ENCODE measurements at regions of chr15 and their contacts with region 1.

Region 1: GRCh38 chr15:92797168-92797951 is 102.8 kb upstream of the CHD2 start:
- DNase-seq: peak; percentile 46
- ATAC-seq: peak; percentile 93
- H3K4me3 Mint-ChIP-seq: no peak overlapping the region
- H3K27ac Mint-ChIP-seq: peak overlapping the region; percentile 31
- H3K4me1 Mint-ChIP-seq: peaks cover 4% of the 10 kb centered on the region
- H3K27me3 Mint-ChIP-seq: no peaks in the 10 kb centered on the region
- CTCF ChIP-seq: peak; percentile 88

Region 2: DNA sequence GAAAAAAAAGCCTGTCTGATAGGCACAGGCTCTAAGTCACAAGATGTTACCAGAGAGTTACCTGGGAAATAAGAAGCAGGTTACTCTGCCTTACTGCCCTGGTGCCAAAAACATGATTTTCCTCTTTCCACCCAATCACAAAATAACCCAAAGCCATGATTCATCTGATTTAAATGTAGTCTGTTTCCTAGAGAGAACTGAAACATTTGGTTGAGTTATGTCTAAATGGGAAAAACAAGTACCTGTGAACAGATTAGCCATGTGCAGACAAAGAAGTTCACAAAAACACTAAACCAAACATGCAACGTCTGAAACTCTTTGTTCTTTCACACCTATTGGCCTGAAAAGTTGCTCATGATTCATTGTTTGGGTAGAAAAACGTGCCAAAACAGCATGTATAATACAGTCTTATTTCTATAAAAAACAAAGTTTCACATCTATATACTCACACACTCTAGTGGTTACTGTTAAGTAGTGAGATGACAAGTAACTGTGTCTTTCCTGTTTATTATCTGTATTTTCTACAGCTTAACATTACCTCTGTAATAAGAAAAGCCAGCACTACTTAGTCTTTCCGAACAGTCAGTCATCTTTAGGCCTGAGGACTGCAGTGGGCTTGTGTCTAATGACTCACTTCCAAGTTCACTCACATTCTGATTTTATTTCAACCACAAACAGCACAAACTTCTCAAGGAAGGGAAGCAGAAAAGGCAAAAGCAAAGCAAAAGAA is 171.9 kb before region 1 on chr15:
- CTCF ChIA-PET with region 1: no interaction called
- POLR2A ChIA-PET with region 1: no interaction called
- intact Hi-C with region 1: no loop called
- DNase-seq: peak; percentile 32
- ATAC-seq: peak; percentile 90
- H3K4me3 Mint-ChIP-seq: no peak overlapping the region
- H3K27ac Mint-ChIP-seq: peak overlapping the region; percentile 83
- H3K4me1 Mint-ChIP-seq: peaks cover 20% of the 10 kb centered on the region
- H3K27me3 Mint-ChIP-seq: peaks cover 4% of the 10 kb centered on the region
- CTCF ChIP-seq: no peak

Region 3: GRCh38 chr15:92763459-92763858 is 33.9 kb before region 1 on chr15:
- CTCF ChIA-PET with region 1: no interaction called
- POLR2A ChIA-PET with region 1: no interaction called
- intact Hi-C with region 1: no loop called
- DNase-seq: no peak
- ATAC-seq: no peak
- H3K4me3 Mint-ChIP-seq: no peak overlapping the region
- H3K27ac Mint-ChIP-seq: no peak overlapping the region
- H3K4me1 Mint-ChIP-seq: no peaks in the 10 kb centered on the region
- H3K27me3 Mint-ChIP-seq: no peaks in the 10 kb centered on the region
- CTCF ChIP-seq: no peak

Region 4: GRCh38 chr15:92781925-92782453 is 15.4 kb before region 1 on chr15:
- CTCF ChIA-PET with region 1: interaction called, 22 read pairs
- POLR2A ChIA-PET with region 1: interaction called, 3 read pairs
- intact Hi-C with region 1: no loop called
- DNase-seq: no peak
- ATAC-seq: no peak
- H3K4me3 Mint-ChIP-seq: no peak overlapping the region
- H3K27ac Mint-ChIP-seq: no peak overlapping the region
- H3K4me1 Mint-ChIP-seq: no peaks in the 10 kb centered on the region
- H3K27me3 Mint-ChIP-seq: no peaks in the 10 kb centered on the region
- CTCF ChIP-seq: no peak

Region 5: GRCh38 chr15:92903941-92904831 is 106.8 kb after region 1 on chr15:
- CTCF ChIA-PET with region 1: interaction called, 15 read pairs
- POLR2A ChIA-PET with region 1: interaction called, 4 read pairs
- intact Hi-C with region 1: no loop called
- DNase-seq: peak; percentile 99
- ATAC-seq: peak; percentile 81
- H3K4me3 Mint-ChIP-seq: peak overlapping the region; percentile 99
- H3K27ac Mint-ChIP-seq: peak overlapping the region; percentile 100
- H3K4me1 Mint-ChIP-seq: peaks cover 49% of the 10 kb centered on the region
- H3K27me3 Mint-ChIP-seq: no peaks in the 10 kb centered on the region
- CTCF ChIP-seq: no peak

Region 6: GRCh38 chr15:92930054-92930621 is 132.8 kb after region 1 on chr15:
- CTCF ChIA-PET with region 1: interaction called, 41 read pairs
- POLR2A ChIA-PET with region 1: no interaction called
- intact Hi-C with region 1: no loop called
- DNase-seq: no peak
- ATAC-seq: no peak
- H3K4me3 Mint-ChIP-seq: no peak overlapping the region
- H3K27ac Mint-ChIP-seq: peak overlapping the region; percentile 36
- H3K4me1 Mint-ChIP-seq: peaks cover 60% of the 10 kb centered on the region
- H3K27me3 Mint-ChIP-seq: no peaks in the 10 kb centered on the region
- CTCF ChIP-seq: no peak

Region 7: DNA sequence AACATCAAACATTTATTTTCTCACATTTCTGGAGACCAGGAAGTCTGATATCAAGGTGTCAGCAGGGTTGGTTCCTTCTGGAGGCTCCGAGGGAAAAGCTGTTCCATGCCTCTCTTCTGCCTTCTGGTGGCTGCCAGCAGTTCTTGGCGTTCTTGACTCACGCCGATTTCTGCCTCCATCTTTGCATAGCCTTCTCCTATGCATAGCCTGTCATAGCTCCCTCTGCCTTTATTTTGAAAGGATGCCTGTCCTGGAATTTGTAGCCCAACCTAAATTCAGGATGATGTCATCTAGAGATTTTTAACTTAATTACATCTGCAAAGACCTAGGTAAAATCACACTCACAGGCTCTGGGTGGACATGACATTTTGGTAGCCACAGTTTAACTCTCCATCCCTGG is 221.2 kb after region 1 on chr15:
- CTCF ChIA-PET with region 1: interaction called, 17 read pairs
- POLR2A ChIA-PET with region 1: no interaction called
- intact Hi-C with region 1: no loop called
- DNase-seq: no peak
- ATAC-seq: no peak
- H3K4me3 Mint-ChIP-seq: no peak overlapping the region
- H3K27ac Mint-ChIP-seq: peak overlapping the region; percentile 75
- H3K4me1 Mint-ChIP-seq: peaks cover 63% of the 10 kb centered on the region
- H3K27me3 Mint-ChIP-seq: no peaks in the 10 kb centered on the region
- CTCF ChIP-seq: no peak

Region 8: GRCh38 chr15:93035953-93036800 is 238.8 kb after region 1 on chr15:
- CTCF ChIA-PET with region 1: interaction called, 37 read pairs
- POLR2A ChIA-PET with region 1: no interaction called
- intact Hi-C with region 1: loop called (anchors 5 kb)
- DNase-seq: peak; percentile 74
- ATAC-seq: peak; percentile 92
- H3K4me3 Mint-ChIP-seq: no peak overlapping the region
- H3K27ac Mint-ChIP-seq: no peak overlapping the region
- H3K4me1 Mint-ChIP-seq: peaks cover 4% of the 10 kb centered on the region
- H3K27me3 Mint-ChIP-seq: no peaks in the 10 kb centered on the region
- CTCF ChIP-seq: peak; percentile 67